ENCODE measurements at regions of chr6 and their contacts with region 1.

Region 1: GRCh38 chr6:133952815-133953633 is at the start of gene TBPL1:
- DNase-seq: peak; percentile 78 to 93 (median 84)
- ATAC-seq: peak; percentile 83 to 88
- H3K4me3 Mint-ChIP-seq: peak within 1 kb of the TSS; percentile 94 to 99 (median 96)
- H3K27ac Mint-ChIP-seq: peak within 1 kb of the TSS; percentile 90 to 96 (median 95)
- H3K4me1 Mint-ChIP-seq: peaks cover 35 to 51% (median 46%) of the 10 kb centered on the region in 4 donors
- H3K27me3 Mint-ChIP-seq: no peaks in the 10 kb centered on the region
- polyA plus RNA-seq, gene TBPL1: 41.4 to 55.7 (median 48.0) TPM

Region 2: DNA sequence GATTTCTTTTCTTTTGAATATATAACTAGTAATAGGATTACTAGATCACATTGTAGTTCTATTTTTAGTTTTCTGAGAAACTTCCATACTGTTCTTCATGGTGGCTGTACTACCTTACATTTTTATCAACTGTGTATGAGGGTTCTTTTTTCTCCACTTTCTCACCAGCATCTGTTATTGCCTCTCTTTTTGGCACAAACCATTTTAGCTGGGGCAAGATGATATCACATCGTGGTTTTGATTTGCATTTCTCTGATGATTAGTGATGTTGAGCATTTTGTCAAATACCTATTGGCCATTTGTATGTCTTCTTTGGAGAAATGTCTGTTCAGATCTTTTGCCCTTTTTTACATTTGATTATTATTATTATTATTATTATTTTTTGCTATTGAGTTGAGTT is 150.2 kb before region 1 on chr6:
- POLR2A ChIA-PET with region 1: no interaction called
- DNase-seq: no peak
- ATAC-seq: no peak
- H3K4me3 Mint-ChIP-seq: no peak overlapping the region
- H3K27ac Mint-ChIP-seq: no peak overlapping the region
- H3K4me1 Mint-ChIP-seq: no peaks in the 10 kb centered on the region
- H3K27me3 Mint-ChIP-seq: peaks cover 16 to 67% (median 21%) of the 10 kb centered on the region in 5 donors

Region 3: DNA sequence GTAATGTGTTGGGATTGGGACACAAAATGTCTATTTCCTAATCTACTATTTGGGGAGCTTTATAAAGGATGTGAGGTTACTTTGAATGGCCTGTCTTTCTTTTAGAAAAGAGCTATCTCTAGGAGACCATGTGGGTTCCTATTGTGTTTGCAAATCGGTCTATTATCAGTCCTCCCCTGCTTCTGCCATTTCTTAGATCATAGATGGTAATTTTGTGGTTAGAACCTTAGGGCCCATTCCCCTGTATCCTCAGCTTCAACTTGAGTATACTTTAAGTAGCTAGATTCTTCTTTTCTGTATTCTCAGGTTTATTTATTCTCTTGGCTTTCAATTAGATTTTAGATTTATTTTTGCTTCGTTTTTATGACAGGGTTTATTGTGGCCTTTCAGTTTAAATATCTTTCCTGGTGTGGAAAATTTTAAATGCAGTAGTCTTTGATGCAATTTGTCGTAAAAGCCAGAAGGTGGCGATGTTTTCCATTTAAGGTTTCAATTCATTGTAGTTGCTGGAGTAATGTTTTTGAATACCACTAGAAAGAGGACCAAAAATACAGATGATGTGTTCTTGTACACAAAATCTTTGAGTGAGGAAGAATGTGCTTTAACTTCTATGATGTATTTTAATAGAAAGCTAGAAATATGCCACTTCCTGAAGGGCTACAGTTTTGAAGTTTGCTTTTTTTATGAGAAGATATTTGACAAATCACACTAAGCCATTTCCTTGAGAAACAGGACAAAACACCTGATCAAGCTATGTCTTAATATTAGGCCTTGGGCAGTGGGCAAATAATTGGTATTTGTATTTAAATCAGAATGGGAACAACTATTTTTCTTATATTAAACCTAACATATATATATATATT is 20.3 kb after region 1 on chr6:
- POLR2A ChIA-PET with region 1: interaction called, 12 read pairs
- DNase-seq: peak in 4 of 10 donors; percentile 4 to 54 (median 49)
- ATAC-seq: peak; percentile 66 to 71
- H3K4me3 Mint-ChIP-seq: no peak overlapping the region
- H3K27ac Mint-ChIP-seq: peak overlapping the region in 2 of 10 donors; percentile 5 to 13
- H3K4me1 Mint-ChIP-seq: peaks cover 16 to 63% (median 42%) of the 10 kb centered on the region in 4 donors
- H3K27me3 Mint-ChIP-seq: no peaks in the 10 kb centered on the region

Measured in naive thymus-derived CD8-positive, alpha-beta T cell (primary cell).